Left cardiac atrium (tissue), 4 donors: ENCODE measurements at regions of chr1 and their contacts with region 1.

Region 1: GRCh38 chr1:173429471-173430402 is 47.4 kb upstream of the PRDX6 start:
- DNase-seq: peak; percentile 95
- ATAC-seq: peak; percentile 95 to 99

Region 2: GRCh38 chr1:173476664-173477285 is 47.0 kb after region 1 on chr1:
- intact Hi-C with region 1: loop called in 1 of 2 experiments (anchors 5 kb)
- DNase-seq: peak; percentile 93
- ATAC-seq: peak; percentile 87 to 89

Region 3: DNA sequence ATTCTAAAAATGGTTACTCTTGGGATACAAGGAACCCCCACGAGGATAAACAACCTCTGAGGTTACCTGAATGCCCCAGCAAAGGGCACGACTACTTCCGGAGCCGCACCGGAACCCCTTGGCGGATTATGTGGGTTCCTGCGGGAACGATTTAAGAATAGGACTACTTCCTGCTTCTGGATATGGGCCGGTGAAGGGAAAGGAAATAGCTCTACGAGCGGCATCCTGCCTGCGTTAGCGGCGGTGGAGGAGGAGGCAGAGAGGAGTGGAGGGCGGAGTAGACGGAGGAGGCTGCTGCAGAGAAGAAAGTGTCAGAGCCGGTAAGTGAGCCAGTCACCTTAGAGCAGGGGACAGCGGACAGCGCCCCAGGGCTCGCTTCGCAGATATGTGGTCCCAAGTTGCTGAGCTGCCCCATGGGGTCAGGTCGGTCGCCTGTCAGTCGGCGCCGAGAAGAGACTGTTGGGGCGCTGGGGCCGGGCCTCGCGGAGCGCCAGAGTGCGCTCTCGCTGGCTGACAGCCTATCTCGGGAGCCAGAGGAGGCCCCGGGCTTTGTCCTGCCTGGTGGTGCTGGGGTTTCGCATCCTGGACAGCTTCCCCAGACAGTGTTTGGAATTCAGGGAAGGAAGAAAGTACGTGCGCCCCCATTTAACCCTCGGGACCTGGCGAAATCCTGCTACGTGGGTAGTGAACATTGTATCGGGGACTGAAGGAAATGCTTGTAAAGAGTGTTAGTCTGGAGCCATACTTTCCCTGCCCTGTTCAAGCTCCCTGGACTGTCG is 285.2 kb after region 1 on chr1 and contains the start of gene KLHL20:
- intact Hi-C with region 1: loop called in 1 of 2 experiments (anchors 2 kb)
- DNase-seq: peak; percentile 82
- ATAC-seq: peak; percentile 97 to 99
- total RNA-seq, gene KLHL20: 17.3 to 19.8 TPM